A673 (cell line): ENCODE measurements at regions of chr7 and their contacts with region 1.

Region 1: DNA sequence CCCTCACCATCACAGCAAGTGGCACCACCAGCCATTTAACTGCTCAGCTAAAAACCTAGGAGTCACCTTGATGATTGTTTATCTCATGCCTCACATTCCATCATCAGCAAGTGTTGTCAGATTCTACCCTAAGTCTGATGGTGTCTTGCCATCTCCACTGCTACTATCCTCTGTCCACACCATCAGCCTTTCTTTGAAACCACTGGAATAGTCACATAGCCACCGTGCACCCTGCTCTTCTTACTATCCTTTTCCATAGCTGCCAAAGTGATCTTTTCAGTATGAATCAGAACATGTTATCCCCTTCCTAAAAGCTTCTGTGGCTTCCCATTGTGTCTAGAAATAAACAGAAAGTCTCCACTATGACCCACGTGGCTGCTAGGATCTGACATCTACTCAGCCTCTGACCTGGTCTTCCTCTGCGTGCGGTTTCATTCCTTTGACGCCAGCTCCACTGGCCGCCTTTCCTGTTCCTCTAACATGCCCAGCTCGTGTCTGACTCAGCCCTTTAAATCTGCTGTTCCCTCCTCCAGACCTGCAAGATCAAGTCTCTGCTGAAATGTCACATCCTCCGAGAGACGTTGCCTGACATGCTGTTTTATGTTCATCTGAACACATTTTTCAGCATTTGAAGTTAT is 16.5 kb upstream of the CHN2 start:
- DNase-seq: no peak
- H3K4me3 ChIP-seq: no peak overlapping the region
- H3K27ac ChIP-seq: no peak overlapping the region
- H3K4me1 ChIP-seq: peaks cover 4% of the 10 kb centered on the region
- H3K27me3 ChIP-seq: no peaks in the 10 kb centered on the region
- CTCF ChIP-seq: no peak

Region 2: DNA sequence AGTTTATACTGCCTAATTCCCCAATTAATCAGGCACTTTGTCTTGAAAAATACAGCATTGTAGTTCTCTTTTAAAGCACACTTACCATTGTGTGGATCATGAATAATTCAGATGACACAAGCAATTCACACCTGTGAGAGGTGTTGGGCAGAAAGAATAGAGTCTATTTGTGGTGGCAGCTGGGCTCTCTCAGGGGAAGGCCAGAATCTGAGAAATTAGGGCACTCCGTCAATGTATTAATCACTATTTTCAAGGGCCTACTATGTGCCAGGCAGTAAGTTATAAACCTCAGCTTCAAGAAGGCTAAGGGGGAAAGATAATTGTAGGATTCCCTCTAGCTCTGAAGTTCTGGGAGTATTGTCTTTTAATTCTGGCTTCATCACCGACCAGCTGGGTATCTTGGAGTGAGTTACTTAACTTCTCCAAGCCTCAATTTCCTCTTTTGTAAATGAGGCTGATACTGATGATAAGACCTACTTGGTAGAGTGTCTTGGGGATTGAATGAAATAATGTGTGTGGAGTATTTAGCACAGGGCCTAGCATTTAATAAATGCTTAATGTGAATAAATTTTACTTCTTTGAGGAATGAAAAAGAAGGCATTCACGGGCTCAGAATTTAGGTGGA is 19.0 kb after region 1 on chr7:
- CTCF ChIA-PET with region 1: no interaction called
- POLR2A ChIA-PET with region 1: interaction called, 14 read pairs
- intact Hi-C with region 1: no loop called
- DNase-seq: no peak
- H3K4me3 ChIP-seq: peak overlapping the region; percentile 84
- H3K27ac ChIP-seq: no peak overlapping the region
- H3K4me1 ChIP-seq: peaks cover 46% of the 10 kb centered on the region
- H3K27me3 ChIP-seq: no peaks in the 10 kb centered on the region
- CTCF ChIP-seq: no peak